Astrocyte of the cerebellum (primary cell): ENCODE measurements at regions of chr10 and their contacts with region 1.

Region 1: DNA sequence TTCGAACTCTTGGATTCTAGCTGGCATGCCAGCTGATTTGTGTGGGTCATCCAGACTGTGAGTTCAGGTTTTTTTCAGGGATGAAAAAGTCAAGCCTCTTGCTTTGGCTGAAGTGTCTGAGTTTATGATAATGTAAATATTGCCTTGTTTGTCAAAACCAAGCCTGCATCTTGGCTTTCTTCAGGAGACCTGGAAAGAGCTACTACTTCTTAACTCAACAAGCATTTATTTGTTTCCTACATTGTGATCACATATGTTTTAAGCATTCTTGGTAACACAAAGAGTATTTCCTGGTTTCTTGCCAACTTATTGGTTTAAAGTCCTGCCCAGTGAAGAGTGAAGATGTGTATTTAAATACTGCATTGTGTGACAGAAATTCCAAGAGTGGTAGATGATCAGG is 407.1 kb downstream of the LRMDA start:
- DNase-seq: no peak
- H3K4me3 ChIP-seq: no peak overlapping the region
- CTCF ChIP-seq: no peak

Region 2: GRCh38 chr10:75717126-75717916 is 121.2 kb before region 1 on chr10:
- in situ Hi-C with region 1: loop called (anchors 10 kb)
- DNase-seq: no peak
- H3K4me3 ChIP-seq: no peak overlapping the region
- CTCF ChIP-seq: no peak